Vagina (tissue), 2 donors: ENCODE measurements at regions of chr11 and their contacts with region 1.

Region 1: GRCh38 chr11:45390407-45390806 is 104.3 kb upstream of the SYT13 start:
- DNase-seq: no peak
- H3K4me3 ChIP-seq: no peak overlapping the region
- H3K27ac ChIP-seq: no peak overlapping the region
- H3K4me1 ChIP-seq: no peaks in the 10 kb centered on the region
- H3K27me3 ChIP-seq: no peaks in the 10 kb centered on the region
- CTCF ChIP-seq: no peak
- POLR2A ChIP-seq: no peak

Region 2: DNA sequence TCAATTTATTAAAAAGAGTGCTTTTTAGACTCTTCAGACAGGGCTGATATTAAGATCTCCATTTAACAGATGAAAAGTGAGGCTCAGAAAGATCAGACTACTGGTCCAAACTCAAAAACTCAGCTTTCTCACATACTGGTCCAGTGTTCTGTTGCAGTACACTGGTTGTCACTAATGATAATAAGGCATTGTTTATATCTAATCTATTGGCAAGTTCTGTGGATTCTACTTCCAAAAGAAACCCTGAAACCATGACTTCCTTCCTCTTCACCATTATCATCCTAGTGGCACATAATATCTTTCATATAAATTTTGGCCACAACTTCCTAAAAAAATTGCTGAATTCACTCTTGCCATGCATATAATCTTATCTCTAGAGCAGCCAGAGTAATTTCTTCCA is 1365.6 kb after region 1 on chr11:
- intact Hi-C with region 1: loop called (anchors 5 kb)
- DNase-seq: no peak
- H3K4me3 ChIP-seq: no peak overlapping the region
- H3K27ac ChIP-seq: no peak overlapping the region
- H3K4me1 ChIP-seq: no peaks in the 10 kb centered on the region
- H3K27me3 ChIP-seq: no peaks in the 10 kb centered on the region
- CTCF ChIP-seq: no peak
- POLR2A ChIP-seq: no peak